CD4-positive, alpha-beta memory T cell (primary cell): ENCODE measurements at regions of chr11 and their contacts with region 1.

Region 1: DNA sequence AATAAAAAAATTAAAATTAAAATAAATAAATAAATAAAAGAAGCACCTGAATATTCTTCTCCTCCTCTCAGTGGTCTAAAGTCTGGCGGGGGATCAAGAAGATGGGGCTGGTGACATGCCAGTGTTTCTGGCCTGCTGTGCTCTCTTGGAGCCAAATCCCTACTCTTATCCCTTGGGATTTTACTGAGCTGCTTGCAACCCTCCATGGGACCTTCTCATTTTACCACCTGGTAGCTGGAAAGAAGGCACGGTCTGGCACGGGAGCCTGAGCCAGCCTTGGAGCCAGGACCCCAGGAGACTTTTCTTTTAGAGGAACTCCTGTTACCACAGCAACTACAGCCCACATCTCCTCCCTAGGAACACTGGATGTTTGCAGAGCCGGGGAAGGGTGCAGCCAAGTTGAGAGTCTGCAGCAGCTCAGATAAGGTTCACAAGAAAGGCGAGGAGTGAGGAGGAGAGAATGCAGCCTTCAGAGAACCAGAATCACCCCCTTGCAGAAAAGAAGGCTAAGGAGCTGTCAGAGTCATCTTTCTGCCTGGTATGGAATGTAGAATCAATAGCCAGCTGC is 21.4 kb downstream of the CD6 start:
- DNase-seq: peak in 1 of 5 donors; percentile 7
- H3K4me3 ChIP-seq: no peak overlapping the region
- H3K4me3 Mint-ChIP-seq: peak overlapping the region; percentile 34 to 81 (median 78)
- H3K27ac ChIP-seq: peak overlapping the region; percentile 51
- H3K27ac Mint-ChIP-seq: peak overlapping the region; percentile 84 to 96 (median 94)
- H3K4me1 ChIP-seq: peaks cover 92% of the 10 kb centered on the region
- H3K4me1 Mint-ChIP-seq: peaks cover 53 to 86% (median 72%) of the 10 kb centered on the region in 4 donors
- H3K27me3 ChIP-seq: no peaks in the 10 kb centered on the region
- H3K27me3 Mint-ChIP-seq: no peaks in the 10 kb centered on the region

Region 2: GRCh38 chr11:61004180-61004611 is 11.3 kb after region 1 on chr11:
- CTCF ChIA-PET with region 1: interaction called, 4 read pairs
- POLR2A ChIA-PET with region 1: interaction called, 75 read pairs
- intact Hi-C with region 1: no loop called
- DNase-seq: peak in 3 of 5 donors; percentile 47 to 76 (median 60)
- H3K4me3 ChIP-seq: peak overlapping the region; percentile 5 to 14
- H3K4me3 Mint-ChIP-seq: peak overlapping the region; percentile 63 to 87 (median 83)
- H3K27ac ChIP-seq: peak overlapping the region; percentile 54
- H3K27ac Mint-ChIP-seq: peak overlapping the region; percentile 89 to 97 (median 95)
- H3K4me1 ChIP-seq: peaks cover 93% of the 10 kb centered on the region
- H3K4me1 Mint-ChIP-seq: peaks cover 51 to 90% (median 66%) of the 10 kb centered on the region in 4 donors
- H3K27me3 ChIP-seq: no peaks in the 10 kb centered on the region
- H3K27me3 Mint-ChIP-seq: no peaks in the 10 kb centered on the region